HCT116 (cell line): ENCODE measurements at regions of chr11 and their contacts with region 1.

Region 1: GRCh38 chr11:20647976-20648565 is 21.3 kb upstream of the NELL1 start:
- DNase-seq: peak; percentile 37
- ATAC-seq: peak; percentile 88
- H3K4me3 ChIP-seq: no peak overlapping the region
- H3K27ac ChIP-seq: no peak overlapping the region
- H3K4me1 ChIP-seq: no peaks in the 10 kb centered on the region
- H3K27me3 ChIP-seq: no peaks in the 10 kb centered on the region
- CTCF ChIP-seq: peak; percentile 46 to 92 (median 77)
- POLR2A ChIP-seq: no peak
- RAD21 ChIP-seq: peak; percentile 74

Region 2: GRCh38 chr11:20671856-20672546 is 23.9 kb after region 1 on chr11:
- CTCF ChIA-PET with region 1: no interaction called
- POLR2A ChIA-PET with region 1: no interaction called
- RAD21 ChIA-PET with region 1: no interaction called
- intact Hi-C with region 1: loop called (anchors 1 kb)
- DNase-seq: peak; percentile 0
- ATAC-seq: peak; percentile 68
- H3K4me3 ChIP-seq: no peak overlapping the region
- H3K27ac ChIP-seq: no peak overlapping the region
- H3K4me1 ChIP-seq: no peaks in the 10 kb centered on the region
- H3K27me3 ChIP-seq: peaks cover 7% of the 10 kb centered on the region; the same call in 1 of the 2 replicates
- CTCF ChIP-seq: peak in 2 of 3 experiments; percentile 30 to 35; a peak in 4 of 6 replicates
- POLR2A ChIP-seq: no peak
- RAD21 ChIP-seq: no peak

Region 3: GRCh38 chr11:21053466-21053865 is 405.4 kb after region 1 on chr11:
- CTCF ChIA-PET with region 1: no interaction called
- POLR2A ChIA-PET with region 1: no interaction called
- RAD21 ChIA-PET with region 1: no interaction called
- intact Hi-C with region 1: no loop called
- DNase-seq: no peak
- ATAC-seq: no peak
- H3K4me3 ChIP-seq: no peak overlapping the region
- H3K27ac ChIP-seq: no peak overlapping the region
- H3K4me1 ChIP-seq: no peaks in the 10 kb centered on the region
- H3K27me3 ChIP-seq: no peaks in the 10 kb centered on the region
- CTCF ChIP-seq: no peak
- POLR2A ChIP-seq: no peak
- RAD21 ChIP-seq: no peak

Region 4: DNA sequence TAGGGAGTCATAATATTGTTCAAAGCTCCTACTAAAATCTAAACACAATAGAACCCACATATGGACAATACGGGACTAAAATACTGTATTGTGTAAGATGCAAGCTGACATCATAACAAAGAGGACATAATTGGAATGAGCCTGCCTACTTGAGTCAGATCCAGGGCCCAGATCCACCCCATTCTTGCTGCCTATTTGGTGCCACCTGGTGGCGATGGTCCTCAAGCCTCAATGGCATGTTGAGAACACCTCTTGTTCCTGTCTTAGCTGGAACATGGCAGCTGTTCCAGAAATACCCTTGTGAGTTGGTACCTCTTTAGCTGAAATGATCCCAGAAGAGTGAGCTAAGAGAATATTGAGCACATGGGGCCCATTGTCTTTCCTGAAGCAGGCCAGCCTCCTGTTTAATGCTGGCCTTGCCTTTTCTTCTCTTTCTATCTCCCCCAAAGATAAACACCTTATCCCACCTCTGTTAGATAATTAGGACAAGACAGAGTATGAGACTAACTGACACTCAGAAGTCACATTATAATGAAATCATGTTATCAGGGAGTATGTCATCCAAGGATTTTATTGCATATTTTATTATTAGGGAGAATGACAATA is 863.9 kb after region 1 on chr11:
- CTCF ChIA-PET with region 1: no interaction called
- POLR2A ChIA-PET with region 1: no interaction called
- RAD21 ChIA-PET with region 1: no interaction called
- intact Hi-C with region 1: loop called (anchors 2 kb)
- DNase-seq: peak; percentile 3
- ATAC-seq: peak; percentile 40; the same call in 1 of the 2 replicates
- H3K4me3 ChIP-seq: no peak overlapping the region
- H3K27ac ChIP-seq: no peak overlapping the region
- H3K4me1 ChIP-seq: no peaks in the 10 kb centered on the region
- H3K27me3 ChIP-seq: no peaks in the 10 kb centered on the region
- CTCF ChIP-seq: peak in 2 of 3 experiments; percentile 50 to 51; a peak in 2 of 6 replicates
- POLR2A ChIP-seq: no peak
- RAD21 ChIP-seq: peak; percentile 22; the same call in 1 of the 2 replicates

Region 5: DNA sequence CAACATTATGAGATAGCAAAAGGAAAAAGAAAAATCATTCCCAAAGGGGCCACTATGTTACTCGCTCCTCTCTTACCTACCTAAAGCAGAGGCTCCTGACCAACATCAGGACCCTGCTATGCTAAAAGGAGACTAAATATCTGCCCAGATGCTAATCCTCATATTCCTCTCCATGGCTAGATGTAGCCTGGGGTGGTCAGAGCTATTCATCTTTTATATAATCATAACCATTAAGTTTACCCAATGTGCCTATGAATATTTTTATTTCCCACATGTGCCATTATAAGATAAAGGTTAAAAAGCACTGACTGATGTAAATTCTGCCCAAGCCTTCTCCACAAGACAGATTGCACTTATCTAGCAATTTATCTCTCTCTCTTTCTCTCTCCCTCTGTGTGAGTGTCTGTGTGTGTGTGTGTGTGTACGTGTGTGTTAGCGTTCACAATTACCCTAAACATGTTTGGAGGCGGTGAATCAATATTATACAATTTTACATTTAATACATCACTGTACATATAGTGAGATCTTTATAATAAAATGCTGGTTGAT is 1503.7 kb after region 1 on chr11:
- CTCF ChIA-PET with region 1: no interaction called
- POLR2A ChIA-PET with region 1: no interaction called
- RAD21 ChIA-PET with region 1: no interaction called
- intact Hi-C with region 1: loop called (anchors 5 kb)
- DNase-seq: no peak
- ATAC-seq: no peak
- H3K4me3 ChIP-seq: no peak overlapping the region
- H3K27ac ChIP-seq: no peak overlapping the region
- H3K4me1 ChIP-seq: no peaks in the 10 kb centered on the region
- H3K27me3 ChIP-seq: no peaks in the 10 kb centered on the region
- CTCF ChIP-seq: no peak
- POLR2A ChIP-seq: no peak
- RAD21 ChIP-seq: no peak

Region 6: DNA sequence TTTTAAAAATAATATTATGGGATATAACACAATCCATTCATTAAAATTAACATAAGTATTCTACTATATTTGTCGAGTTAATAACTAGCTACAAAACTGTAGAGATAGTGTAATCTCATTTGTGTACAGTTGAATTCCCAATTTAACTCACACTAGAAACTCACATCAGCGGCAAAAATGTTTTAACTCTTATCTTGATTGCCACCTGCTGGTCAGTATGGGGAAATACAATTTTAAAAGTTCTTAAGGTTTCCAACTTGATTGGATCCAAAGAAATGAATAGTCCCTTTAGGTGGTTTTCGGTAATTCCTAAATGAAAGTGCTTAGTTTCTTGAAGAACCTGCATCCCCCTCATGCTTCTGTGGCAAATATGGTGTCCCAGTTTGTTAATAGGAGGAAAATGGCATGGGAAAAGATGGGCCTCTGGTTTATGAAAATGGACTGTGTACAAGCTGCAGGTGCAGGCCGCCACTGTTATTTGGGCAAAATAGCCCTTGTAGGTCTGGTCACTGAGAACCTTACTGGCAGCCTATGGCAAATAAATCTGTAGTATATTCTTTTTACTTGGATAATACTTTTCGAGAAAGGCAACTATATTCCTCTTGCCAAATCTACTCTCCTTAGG is 1656.4 kb after region 1 on chr11:
- CTCF ChIA-PET with region 1: no interaction called
- POLR2A ChIA-PET with region 1: no interaction called
- RAD21 ChIA-PET with region 1: no interaction called
- intact Hi-C with region 1: loop called (anchors 2 kb)
- DNase-seq: peak; percentile 18
- ATAC-seq: peak; percentile 53
- H3K4me3 ChIP-seq: no peak overlapping the region
- H3K27ac ChIP-seq: no peak overlapping the region
- H3K4me1 ChIP-seq: no peaks in the 10 kb centered on the region
- H3K27me3 ChIP-seq: 0 out of 2 replicates have a peak, but pooled peaks cover 3% of the 10 kb centered on the region
- CTCF ChIP-seq: peak; percentile 29 to 64 (median 33); a peak in 5 of 6 replicates
- POLR2A ChIP-seq: no peak
- RAD21 ChIP-seq: peak; percentile 42